ENCODE measurements at regions of chr17 and their contacts with region 1.

Region 1: GRCh38 chr17:29722411-29723198 is 99.9 kb upstream of the CORO6 start:
- DNase-seq: peak; percentile 16 to 85 (median 53)
- ATAC-seq: peak; percentile 77
- H3K4me3 ChIP-seq: peak overlapping the region; percentile 10 to 30
- H3K4me3 Mint-ChIP-seq: peak overlapping the region; percentile 73
- H3K27ac ChIP-seq: peak overlapping the region; percentile 46 to 73
- H3K27ac Mint-ChIP-seq: peak overlapping the region; percentile 94
- H3K4me1 ChIP-seq: peaks cover 70% of the 10 kb centered on the region
- H3K4me1 Mint-ChIP-seq: peaks cover 84% of the 10 kb centered on the region
- H3K27me3 ChIP-seq: no peaks in the 10 kb centered on the region
- H3K27me3 Mint-ChIP-seq: no peaks in the 10 kb centered on the region
- CTCF ChIP-seq: no peak

Region 2: GRCh38 chr17:29622337-29623282 is 100.0 kb before region 1 on chr17 and contains the start of gene CORO6:
- CTCF ChIA-PET with region 1: interaction called, 4 read pairs
- POLR2A ChIA-PET with region 1: no interaction called
- intact Hi-C with region 1: loop called in 1 of 2 experiments (anchors 5 kb)
- DNase-seq: peak; percentile 41 to 79 (median 69)
- ATAC-seq: peak; percentile 75
- H3K4me3 ChIP-seq: peak within 1 kb of the TSS; percentile 58 to 72
- H3K4me3 Mint-ChIP-seq: peak within 1 kb of the TSS; percentile 83
- H3K27ac ChIP-seq: no peak within 1 kb of the TSS
- H3K27ac Mint-ChIP-seq: peak within 1 kb of the TSS; percentile 45
- H3K4me1 ChIP-seq: peaks cover 28% of the 10 kb centered on the region
- H3K4me1 Mint-ChIP-seq: peaks cover 28% of the 10 kb centered on the region
- H3K27me3 ChIP-seq: no peaks in the 10 kb centered on the region
- H3K27me3 Mint-ChIP-seq: no peaks in the 10 kb centered on the region
- CTCF ChIP-seq: no peak
- total RNA-seq, gene CORO6: 1.2 to 1.7 TPM

Region 3: GRCh38 chr17:29687596-29687995 is 35.0 kb before region 1 on chr17:
- CTCF ChIA-PET with region 1: no interaction called
- POLR2A ChIA-PET with region 1: no interaction called
- intact Hi-C with region 1: loop called in 1 of 2 experiments (anchors 2 kb)
- DNase-seq: no peak
- ATAC-seq: no peak
- H3K4me3 ChIP-seq: no peak overlapping the region
- H3K4me3 Mint-ChIP-seq: no peak overlapping the region
- H3K27ac ChIP-seq: no peak overlapping the region
- H3K27ac Mint-ChIP-seq: peak overlapping the region; percentile 27
- H3K4me1 ChIP-seq: no peaks in the 10 kb centered on the region
- H3K4me1 Mint-ChIP-seq: peaks cover 22% of the 10 kb centered on the region
- H3K27me3 ChIP-seq: no peaks in the 10 kb centered on the region
- H3K27me3 Mint-ChIP-seq: no peaks in the 10 kb centered on the region
- CTCF ChIP-seq: no peak

Region 4: DNA sequence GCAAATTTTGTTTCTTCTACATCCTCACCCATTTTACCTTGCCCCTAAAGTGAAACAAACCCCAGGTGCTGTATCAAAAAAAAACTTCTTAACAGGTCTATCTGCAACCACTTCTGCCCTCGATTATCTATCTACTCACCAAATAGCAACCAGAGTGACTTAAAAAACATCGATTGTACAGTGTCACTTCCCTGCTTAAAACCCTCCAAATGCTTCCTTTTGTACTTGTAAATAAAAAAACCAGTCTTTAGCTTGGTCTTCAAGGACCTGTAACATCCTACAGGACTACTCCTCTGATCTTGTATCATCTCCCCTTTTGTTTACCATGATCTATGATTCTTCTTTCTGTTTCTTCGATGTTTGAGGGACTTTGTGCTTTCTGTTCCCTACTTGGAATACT is 17.2 kb before region 1 on chr17:
- CTCF ChIA-PET with region 1: interaction called, 8 read pairs
- POLR2A ChIA-PET with region 1: interaction called, 47 read pairs
- intact Hi-C with region 1: loop called (anchors 1 kb)
- DNase-seq: peak in 2 of 9 experiments; percentile 29 to 58
- ATAC-seq: peak; percentile 16
- H3K4me3 ChIP-seq: peak overlapping the region; percentile 1 to 9
- H3K4me3 Mint-ChIP-seq: peak overlapping the region; percentile 66
- H3K27ac ChIP-seq: peak overlapping the region; percentile 62 to 91
- H3K27ac Mint-ChIP-seq: peak overlapping the region; percentile 99
- H3K4me1 ChIP-seq: peaks cover 37% of the 10 kb centered on the region
- H3K4me1 Mint-ChIP-seq: peaks cover 58% of the 10 kb centered on the region
- H3K27me3 ChIP-seq: no peaks in the 10 kb centered on the region
- H3K27me3 Mint-ChIP-seq: no peaks in the 10 kb centered on the region
- CTCF ChIP-seq: no peak

Region 5: DNA sequence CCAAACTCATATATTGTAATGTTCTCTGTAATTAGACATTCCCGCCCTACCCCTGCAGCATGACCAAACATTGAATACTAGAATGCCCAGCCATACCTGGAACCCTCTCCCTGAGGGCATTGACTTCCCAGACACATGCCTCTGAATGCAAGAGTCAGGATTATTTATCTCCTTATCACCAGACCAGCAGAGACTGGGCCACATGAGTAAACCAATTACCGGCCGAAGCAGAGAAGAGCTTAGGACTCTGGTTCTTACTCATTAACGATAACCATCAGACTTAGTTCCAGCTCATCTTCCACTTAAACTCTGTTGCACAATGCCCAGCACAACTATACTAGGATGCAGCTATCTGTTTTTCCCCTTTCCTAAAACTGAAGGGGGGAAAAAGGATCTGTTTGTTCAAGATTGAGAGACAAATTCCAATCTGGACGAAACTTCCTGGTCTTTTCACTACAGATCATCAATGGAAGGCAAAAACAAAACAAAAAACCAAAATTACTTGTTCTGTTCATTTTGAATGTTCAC is 11.7 kb before region 1 on chr17:
- CTCF ChIA-PET with region 1: interaction called, 20 read pairs
- POLR2A ChIA-PET with region 1: interaction called, 47 read pairs
- intact Hi-C with region 1: loop called (anchors 1 kb)
- DNase-seq: no peak
- ATAC-seq: no peak
- H3K4me3 ChIP-seq: no peak overlapping the region
- H3K4me3 Mint-ChIP-seq: no peak overlapping the region
- H3K27ac ChIP-seq: no peak overlapping the region
- H3K27ac Mint-ChIP-seq: peak overlapping the region; percentile 84
- H3K4me1 ChIP-seq: peaks cover 36% of the 10 kb centered on the region
- H3K4me1 Mint-ChIP-seq: peaks cover 73% of the 10 kb centered on the region
- H3K27me3 ChIP-seq: no peaks in the 10 kb centered on the region
- H3K27me3 Mint-ChIP-seq: no peaks in the 10 kb centered on the region
- CTCF ChIP-seq: no peak

Region 6: GRCh38 chr17:29740017-29740416 is 17.4 kb after region 1 on chr17:
- CTCF ChIA-PET with region 1: interaction called, 3 read pairs
- POLR2A ChIA-PET with region 1: interaction called, 6 read pairs
- intact Hi-C with region 1: loop called in 1 of 2 experiments (anchors 2 kb)
- DNase-seq: peak in 1 of 9 experiments; percentile 30
- ATAC-seq: peak; percentile 22
- H3K4me3 ChIP-seq: no peak overlapping the region
- H3K4me3 Mint-ChIP-seq: peak overlapping the region; percentile 15
- H3K27ac ChIP-seq: peak overlapping the region in 1 of 2 experiments; percentile 54
- H3K27ac Mint-ChIP-seq: peak overlapping the region; percentile 87
- H3K4me1 ChIP-seq: peaks cover 30% of the 10 kb centered on the region
- H3K4me1 Mint-ChIP-seq: peaks cover 57% of the 10 kb centered on the region
- H3K27me3 ChIP-seq: no peaks in the 10 kb centered on the region
- H3K27me3 Mint-ChIP-seq: no peaks in the 10 kb centered on the region
- CTCF ChIP-seq: no peak

Region 7: GRCh38 chr17:30116661-30117551 is 394.3 kb after region 1 on chr17 and contains the start of gene NSRP1:
- CTCF ChIA-PET with region 1: no interaction called
- POLR2A ChIA-PET with region 1: no interaction called
- intact Hi-C with region 1: no loop called
- DNase-seq: peak; percentile 83 to 96 (median 92)
- ATAC-seq: peak; percentile 97
- H3K4me3 ChIP-seq: peak within 1 kb of the TSS; percentile 66 to 96
- H3K4me3 Mint-ChIP-seq: peak within 1 kb of the TSS; percentile 100
- H3K27ac ChIP-seq: peak within 1 kb of the TSS; percentile 95 to 99
- H3K27ac Mint-ChIP-seq: peak within 1 kb of the TSS; percentile 100
- H3K4me1 ChIP-seq: peaks cover 16% of the 10 kb centered on the region
- H3K4me1 Mint-ChIP-seq: peaks cover 41% of the 10 kb centered on the region
- H3K27me3 ChIP-seq: no peaks in the 10 kb centered on the region
- H3K27me3 Mint-ChIP-seq: no peaks in the 10 kb centered on the region
- CTCF ChIP-seq: no peak
- total RNA-seq, gene NSRP1: 22.4 to 23.1 TPM

Measured in CD8-positive, alpha-beta T cell (primary cell).